ENCODE measurements at regions of chr1 and their contacts with region 1.

Region 1: DNA sequence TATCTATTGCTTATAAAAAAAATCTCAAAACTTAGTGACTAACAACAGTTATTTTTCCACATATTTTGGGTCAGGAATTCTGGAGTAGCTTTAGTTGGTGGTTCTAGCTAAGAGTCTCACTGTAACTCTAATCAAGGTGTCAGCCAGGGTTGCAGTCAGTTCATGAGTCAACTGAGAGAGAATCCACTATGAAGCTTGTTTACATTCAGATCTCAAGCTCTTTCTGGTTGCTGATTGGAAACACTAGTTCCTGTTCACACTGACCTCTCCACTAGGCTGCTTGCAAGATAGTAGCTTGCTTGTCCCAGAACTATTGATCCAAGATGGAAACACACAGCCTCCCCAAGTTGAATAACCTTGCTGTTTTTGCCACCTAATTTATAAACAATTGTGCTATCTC is 1192.1 kb upstream of the B3GALT2 start:
- DNase-seq: no peak
- H3K4me3 ChIP-seq: no peak overlapping the region
- H3K27ac ChIP-seq: no peak overlapping the region
- H3K4me1 ChIP-seq: no peaks in the 10 kb centered on the region
- H3K27me3 ChIP-seq: no peaks in the 10 kb centered on the region
- CTCF ChIP-seq: no peak

Region 2: DNA sequence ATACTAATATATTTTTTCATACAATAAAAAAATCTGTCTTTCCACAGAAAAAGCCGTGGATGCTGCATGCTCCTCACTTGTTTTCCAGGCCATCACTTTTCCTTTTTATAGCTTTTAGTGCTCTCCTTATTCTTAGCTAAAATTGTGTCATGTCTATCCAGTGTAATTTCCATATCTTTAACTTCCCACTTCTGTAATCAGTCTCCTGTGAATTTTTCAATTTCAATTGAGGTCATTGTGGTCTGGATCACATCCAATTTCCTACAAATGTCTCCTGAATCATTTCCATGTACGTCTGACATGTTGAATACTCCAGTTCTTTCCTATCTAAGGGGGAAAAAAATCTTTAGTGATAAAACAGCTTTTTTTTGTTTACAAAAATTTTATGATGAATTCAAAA is 353.9 kb before region 1 on chr1:
- intact Hi-C with region 1: loop called (anchors 5 kb)
- DNase-seq: no peak
- H3K4me3 ChIP-seq: no peak overlapping the region
- H3K27ac ChIP-seq: no peak overlapping the region
- H3K4me1 ChIP-seq: no peaks in the 10 kb centered on the region
- H3K27me3 ChIP-seq: no peaks in the 10 kb centered on the region
- CTCF ChIP-seq: no peak

Region 3: DNA sequence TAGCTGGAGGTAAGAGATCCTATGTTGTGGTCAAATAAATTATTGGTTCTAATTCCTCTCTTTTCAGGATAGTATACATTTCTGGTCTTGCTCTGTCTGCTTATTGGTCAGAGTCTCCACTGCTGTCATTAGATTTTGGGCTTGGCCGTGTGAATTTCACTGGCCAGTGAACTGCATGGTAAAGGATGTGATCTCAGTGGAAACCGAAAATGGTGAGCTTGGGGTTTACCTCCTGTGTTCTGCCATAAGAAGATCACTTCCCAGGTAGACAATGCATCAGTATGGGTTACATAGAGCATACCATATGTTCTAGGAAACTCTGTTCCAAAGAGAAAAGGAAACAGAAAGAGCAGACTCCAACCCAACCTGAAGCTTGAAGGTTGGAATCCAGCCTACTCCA is 68.8 kb before region 1 on chr1:
- intact Hi-C with region 1: loop called (anchors 2 kb)
- DNase-seq: no peak
- H3K4me3 ChIP-seq: no peak overlapping the region
- H3K27ac ChIP-seq: no peak overlapping the region
- H3K4me1 ChIP-seq: no peaks in the 10 kb centered on the region
- H3K27me3 ChIP-seq: no peaks in the 10 kb centered on the region
- CTCF ChIP-seq: no peak

Measured in tibial artery (tissue), 4 donors.